ENCODE measurements at regions of chr7 and their contacts with region 1.

Region 1: DNA sequence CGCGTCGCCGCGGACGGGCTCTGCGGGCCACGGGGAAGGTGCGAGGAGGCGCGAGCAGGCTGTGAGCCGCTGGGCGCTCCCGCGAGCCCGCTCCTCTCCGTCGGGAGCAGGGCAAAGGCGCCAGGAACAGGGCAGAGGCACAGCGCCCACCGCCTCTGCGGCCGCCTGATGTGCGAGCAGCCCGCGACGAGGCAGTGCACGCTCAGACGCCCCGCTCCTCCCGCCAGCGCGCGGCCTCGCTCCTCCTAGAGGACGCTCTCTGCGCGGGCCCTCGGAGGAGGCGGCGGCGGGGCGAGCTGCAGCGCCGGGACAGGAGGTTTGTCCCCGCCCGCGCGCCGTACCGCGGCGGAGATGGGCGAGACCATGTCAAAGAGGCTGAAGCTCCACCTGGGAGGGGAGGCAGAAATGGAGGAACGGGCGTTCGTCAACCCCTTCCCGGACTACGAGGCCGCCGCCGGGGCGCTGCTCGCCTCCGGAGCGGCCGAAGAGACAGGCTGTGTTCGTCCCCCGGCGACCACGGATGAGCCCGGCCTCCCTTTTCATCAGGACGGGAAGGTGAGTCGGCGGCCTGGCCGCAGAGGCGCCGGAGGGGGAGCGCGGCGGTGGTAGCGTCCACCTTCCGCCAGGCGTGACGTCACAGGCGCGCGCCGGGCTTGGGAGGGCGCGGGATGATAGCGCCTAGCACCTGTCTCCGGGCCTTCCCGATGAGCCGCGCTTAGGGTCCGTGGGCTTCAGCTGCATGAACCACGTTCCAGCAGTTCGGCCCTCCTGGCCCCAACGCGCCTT is 731 bp downstream of the LANCL2 start:
- DNase-seq: peak; percentile 100
- ATAC-seq: peak; percentile 88
- H3K4me3 ChIP-seq: peak overlapping the region; percentile 80 to 99 (median 92)
- H3K4me3 Mint-ChIP-seq: peak overlapping the region; percentile 96
- H3K27ac ChIP-seq: peak overlapping the region; percentile 96 to 98
- H3K27ac Mint-ChIP-seq: peak overlapping the region; percentile 100
- H3K4me1 ChIP-seq: peaks cover 13 to 22% of the 10 kb centered on the region in 2 donors
- H3K4me1 Mint-ChIP-seq: peaks cover 22% of the 10 kb centered on the region
- H3K27me3 ChIP-seq: no peaks in the 10 kb centered on the region
- H3K27me3 Mint-ChIP-seq: peaks cover 3% of the 10 kb centered on the region
- CTCF ChIP-seq: peak; percentile 41

Region 2: DNA sequence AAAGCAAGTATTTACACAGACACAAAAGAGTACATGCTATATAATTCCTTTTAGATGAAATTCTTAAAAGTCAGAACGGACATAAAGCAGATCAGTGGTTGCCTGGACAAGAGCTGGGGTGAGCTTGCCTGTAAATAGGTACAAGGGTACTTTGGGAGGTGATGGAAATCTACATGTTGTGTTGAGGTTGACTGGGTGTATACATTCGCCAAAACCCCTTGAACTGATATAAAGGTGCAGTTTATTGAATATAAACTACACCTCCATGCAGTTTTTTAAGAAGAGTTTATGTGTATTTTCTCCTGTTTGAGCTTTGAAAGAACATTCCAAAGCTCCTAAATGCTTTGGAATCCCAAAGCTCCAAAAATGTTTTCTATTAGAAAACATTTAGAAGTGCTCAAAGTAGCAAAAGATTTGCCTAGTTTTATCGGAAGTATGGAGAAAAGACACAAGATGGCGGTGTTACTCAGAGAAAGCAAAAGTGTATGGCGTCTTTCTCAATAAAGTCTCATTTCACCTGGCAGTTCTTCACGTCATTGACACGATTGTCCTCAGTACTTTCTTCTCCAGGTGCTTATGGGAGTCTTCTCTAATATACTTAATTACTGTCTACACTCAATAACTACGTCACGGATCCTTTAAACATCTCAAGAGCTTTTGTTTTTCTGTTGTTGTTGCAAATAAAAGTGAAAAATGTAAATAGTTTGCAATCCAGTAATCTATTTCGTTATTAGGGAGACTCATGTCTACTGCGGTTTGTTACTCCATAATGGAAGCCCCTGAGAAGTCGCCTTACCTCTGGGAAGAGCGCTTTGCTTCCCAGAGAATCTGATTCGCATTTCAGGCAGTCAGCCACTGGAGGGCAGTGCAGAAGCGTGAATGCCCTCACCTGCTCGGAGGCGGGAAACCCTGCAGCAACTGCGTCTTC is 592.1 kb before region 1 on chr7:
- CTCF ChIA-PET with region 1: interaction called, 4 read pairs
- POLR2A ChIA-PET with region 1: no interaction called
- intact Hi-C with region 1: loop called (anchors 5 kb)
- DNase-seq: peak; percentile 61
- ATAC-seq: peak; percentile 78
- H3K4me3 ChIP-seq: peak overlapping the region in 4 of 5 experiments; percentile 29 to 46 (median 40)
- H3K4me3 Mint-ChIP-seq: peak overlapping the region; percentile 83
- H3K27ac ChIP-seq: no peak overlapping the region
- H3K27ac Mint-ChIP-seq: peak overlapping the region; percentile 35
- H3K4me1 ChIP-seq: no peaks in the 10 kb centered on the region
- H3K4me1 Mint-ChIP-seq: peaks cover 9% of the 10 kb centered on the region
- H3K27me3 ChIP-seq: peaks cover 0 to 19% (median 9%) of the 10 kb centered on the region in 4 experiments
- H3K27me3 Mint-ChIP-seq: peaks cover 28% of the 10 kb centered on the region
- CTCF ChIP-seq: peak; percentile 85

Region 3: GRCh38 chr7:55280031-55280454 is 85.8 kb before region 1 on chr7:
- CTCF ChIA-PET with region 1: no interaction called
- POLR2A ChIA-PET with region 1: no interaction called
- intact Hi-C with region 1: loop called (anchors 1 kb)
- DNase-seq: peak; percentile 69
- ATAC-seq: peak; percentile 73
- H3K4me3 ChIP-seq: no peak overlapping the region
- H3K4me3 Mint-ChIP-seq: no peak overlapping the region
- H3K27ac ChIP-seq: no peak overlapping the region
- H3K27ac Mint-ChIP-seq: no peak overlapping the region
- H3K4me1 ChIP-seq: no peaks in the 10 kb centered on the region
- H3K4me1 Mint-ChIP-seq: no peaks in the 10 kb centered on the region
- H3K27me3 ChIP-seq: peaks cover 0 to 3% (median 0%) of the 10 kb centered on the region in 4 experiments
- H3K27me3 Mint-ChIP-seq: peaks cover 4% of the 10 kb centered on the region
- CTCF ChIP-seq: peak; percentile 68

Region 4: GRCh38 chr7:55534175-55534915 is 168.5 kb after region 1 on chr7:
- CTCF ChIA-PET with region 1: interaction called, 3 read pairs
- POLR2A ChIA-PET with region 1: interaction called, 5 read pairs
- intact Hi-C with region 1: loop called (anchors 2 kb)
- DNase-seq: peak; percentile 94
- ATAC-seq: peak; percentile 67
- H3K4me3 ChIP-seq: peak overlapping the region; percentile 2 to 59 (median 34)
- H3K4me3 Mint-ChIP-seq: peak overlapping the region; percentile 83
- H3K27ac ChIP-seq: peak overlapping the region; percentile 100
- H3K27ac Mint-ChIP-seq: peak overlapping the region; percentile 99
- H3K4me1 ChIP-seq: peaks cover 75 to 94% of the 10 kb centered on the region in 2 donors
- H3K4me1 Mint-ChIP-seq: peaks cover 94% of the 10 kb centered on the region
- H3K27me3 ChIP-seq: no peaks in the 10 kb centered on the region
- H3K27me3 Mint-ChIP-seq: no peaks in the 10 kb centered on the region
- CTCF ChIP-seq: no peak

Region 5: GRCh38 chr7:55964261-55965099 is 598.6 kb after region 1 on chr7 and contains the start of gene NIPSNAP2:
- CTCF ChIA-PET with region 1: interaction called, 4 read pairs
- POLR2A ChIA-PET with region 1: interaction called, 3 read pairs
- intact Hi-C with region 1: loop called (anchors 1 kb)
- DNase-seq: peak; percentile 80
- ATAC-seq: peak; percentile 90
- H3K4me3 ChIP-seq: peak within 1 kb of the TSS; percentile 48 to 66 (median 58)
- H3K4me3 Mint-ChIP-seq: peak within 1 kb of the TSS; percentile 91
- H3K27ac ChIP-seq: peak within 1 kb of the TSS; percentile 75 to 88
- H3K27ac Mint-ChIP-seq: peak within 1 kb of the TSS; percentile 93
- H3K4me1 ChIP-seq: peaks cover 8 to 16% of the 10 kb centered on the region in 2 donors
- H3K4me1 Mint-ChIP-seq: peaks cover 36% of the 10 kb centered on the region
- H3K27me3 ChIP-seq: no peaks in the 10 kb centered on the region
- H3K27me3 Mint-ChIP-seq: no peaks in the 10 kb centered on the region
- CTCF ChIP-seq: peak; percentile 58
- total RNA-seq, gene NIPSNAP2: 40.4 and 42.6 TPM in 2 replicates